WTC11 (cell line): ENCODE measurements at regions of chr1 and their contacts with region 1.

Region 1: GRCh38 chr1:161225534-161226319 is at the start of gene TOMM40L:
- DNase-seq: peak; percentile 88
- ATAC-seq: peak; percentile 94
- H3K4me3 Mint-ChIP-seq: peak within 1 kb of the TSS; percentile 100
- H3K27ac Mint-ChIP-seq: peak within 1 kb of the TSS; percentile 98
- H3K4me1 Mint-ChIP-seq: peaks cover 28% of the 10 kb centered on the region
- H3K27me3 Mint-ChIP-seq: no peaks in the 10 kb centered on the region
- CTCF ChIP-seq: no peak
- total RNA-seq, gene TOMM40L: 13.0 to 16.9 TPM (median 15.1 TPM) in 3 replicates

Region 2: GRCh38 chr1:160862203-160863060 is 363.3 kb before region 1 on chr1 and contains the start of gene CD244:
- CTCF ChIA-PET with region 1: no interaction called
- POLR2A ChIA-PET with region 1: no interaction called
- DNase-seq: no peak
- ATAC-seq: peak; percentile 57
- H3K4me3 Mint-ChIP-seq: no peak within 1 kb of the TSS
- H3K27ac Mint-ChIP-seq: no peak within 1 kb of the TSS
- H3K4me1 Mint-ChIP-seq: peaks cover 7% of the 10 kb centered on the region
- H3K27me3 Mint-ChIP-seq: no peaks in the 10 kb centered on the region
- CTCF ChIP-seq: no peak
- total RNA-seq, gene CD244: not detected in 3 replicates

Region 3: GRCh38 chr1:161013488-161014230 is 212.1 kb before region 1 on chr1:
- CTCF ChIA-PET with region 1: no interaction called
- POLR2A ChIA-PET with region 1: no interaction called
- DNase-seq: peak; percentile 79
- ATAC-seq: peak; percentile 93
- H3K4me3 Mint-ChIP-seq: peak overlapping the region; percentile 57
- H3K27ac Mint-ChIP-seq: peak overlapping the region; percentile 98
- H3K4me1 Mint-ChIP-seq: peaks cover 63% of the 10 kb centered on the region
- H3K27me3 Mint-ChIP-seq: no peaks in the 10 kb centered on the region
- CTCF ChIP-seq: no peak

Region 4: DNA sequence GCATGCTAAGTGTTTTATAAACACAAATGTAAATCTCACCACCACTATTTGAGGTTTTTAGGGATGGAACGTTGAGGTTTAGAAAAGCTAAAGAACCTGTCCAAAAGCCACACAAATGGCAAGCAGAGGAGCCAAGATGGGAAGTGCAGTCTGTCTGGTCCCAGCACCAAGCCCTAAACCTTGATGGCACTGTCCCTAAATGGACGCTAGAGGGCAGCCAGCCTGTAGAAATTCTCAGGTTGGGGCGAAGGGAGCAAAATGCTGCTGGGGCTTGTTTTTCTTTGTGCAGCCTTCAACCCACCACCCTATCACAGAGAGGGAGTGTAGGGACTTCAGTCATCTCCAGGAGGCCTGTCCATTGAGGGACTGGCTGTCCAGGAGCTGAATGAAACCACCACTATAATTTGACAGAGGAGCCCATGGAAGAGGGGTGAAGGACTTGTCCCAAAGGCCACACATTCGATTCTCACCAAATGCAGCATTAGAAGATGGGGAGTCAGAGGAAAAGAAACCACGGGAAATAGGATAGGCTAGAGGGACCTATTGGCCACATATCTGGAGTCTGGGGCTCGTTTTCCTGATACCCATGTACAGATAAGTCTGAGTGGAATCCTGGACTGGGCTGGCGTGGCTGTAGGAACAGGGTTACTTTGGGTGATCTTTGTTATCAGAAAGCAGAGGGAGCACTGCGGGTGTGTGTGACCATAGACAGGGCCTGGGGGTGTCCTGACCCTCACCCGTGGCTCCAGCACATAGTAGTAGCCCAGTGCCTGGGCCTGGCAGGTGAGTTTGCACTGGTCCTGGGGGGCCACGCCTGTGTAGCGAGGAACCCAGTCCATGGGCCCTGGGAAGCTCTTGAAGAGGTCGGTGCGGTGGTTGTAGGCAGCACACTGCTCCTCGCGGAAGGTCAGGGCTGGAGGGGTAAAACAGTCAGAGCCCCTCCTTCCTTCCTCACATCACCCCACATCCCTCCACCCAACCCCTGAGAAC is 33.0 kb before region 1 on chr1:
- CTCF ChIA-PET with region 1: interaction called, 47 read pairs
- POLR2A ChIA-PET with region 1: interaction called, 3 read pairs
- DNase-seq: peak; percentile 68
- ATAC-seq: peak; percentile 72
- H3K4me3 Mint-ChIP-seq: no peak overlapping the region
- H3K27ac Mint-ChIP-seq: peak overlapping the region; percentile 47
- H3K4me1 Mint-ChIP-seq: peaks cover 24% of the 10 kb centered on the region
- H3K27me3 Mint-ChIP-seq: no peaks in the 10 kb centered on the region
- CTCF ChIP-seq: peak; percentile 71

Region 5: GRCh38 chr1:161238039-161238473 is 12.3 kb after region 1 on chr1 and contains the start of gene NR1I3:
- CTCF ChIA-PET with region 1: interaction called, 17 read pairs
- POLR2A ChIA-PET with region 1: no interaction called
- DNase-seq: no peak
- ATAC-seq: no peak
- H3K4me3 Mint-ChIP-seq: no peak within 1 kb of the TSS
- H3K27ac Mint-ChIP-seq: no peak within 1 kb of the TSS
- H3K4me1 Mint-ChIP-seq: no peaks in the 10 kb centered on the region
- H3K27me3 Mint-ChIP-seq: peaks cover 4% of the 10 kb centered on the region
- CTCF ChIP-seq: no peak
- total RNA-seq, gene NR1I3: 0.16 TPM in 1 of 3 replicates, not detected in the others

Region 6: GRCh38 chr1:161292631-161293030 is 66.9 kb after region 1 on chr1:
- CTCF ChIA-PET with region 1: interaction called, 71 read pairs
- POLR2A ChIA-PET with region 1: interaction called, 5 read pairs
- DNase-seq: no peak
- ATAC-seq: no peak
- H3K4me3 Mint-ChIP-seq: no peak overlapping the region
- H3K27ac Mint-ChIP-seq: no peak overlapping the region
- H3K4me1 Mint-ChIP-seq: peaks cover 4% of the 10 kb centered on the region; the same call in 1 of the 2 replicates
- H3K27me3 Mint-ChIP-seq: no peaks in the 10 kb centered on the region
- CTCF ChIP-seq: no peak

Region 7: DNA sequence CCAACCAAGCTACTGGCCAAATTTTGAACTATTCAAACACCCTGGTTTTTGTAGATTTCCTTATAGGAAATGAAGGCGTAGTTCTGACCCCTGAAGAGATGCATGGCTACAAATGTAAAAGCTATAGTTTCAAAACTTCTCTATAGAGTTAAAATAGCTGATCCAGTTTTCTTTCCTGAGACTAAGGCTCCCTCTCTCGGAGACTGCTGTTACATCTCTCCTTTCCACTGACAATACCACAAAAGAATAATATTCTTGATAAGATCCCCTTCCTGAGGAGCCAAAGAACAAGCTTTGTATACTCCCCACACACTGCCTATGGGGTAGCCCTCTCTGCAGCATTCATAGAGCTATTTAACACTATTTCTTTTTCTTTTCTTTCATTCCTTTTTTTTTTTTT is 148.6 kb after region 1 on chr1:
- CTCF ChIA-PET with region 1: interaction called, 22 read pairs
- POLR2A ChIA-PET with region 1: no interaction called
- DNase-seq: no peak
- ATAC-seq: peak; percentile 46
- H3K4me3 Mint-ChIP-seq: no peak overlapping the region
- H3K27ac Mint-ChIP-seq: no peak overlapping the region
- H3K4me1 Mint-ChIP-seq: no peaks in the 10 kb centered on the region
- H3K27me3 Mint-ChIP-seq: no peaks in the 10 kb centered on the region
- CTCF ChIP-seq: no peak